ENCODE measurements at regions of chr7 and their contacts with region 1.

Region 1: GRCh38 chr7:7182156-7183060 is at the start of gene C1GALT1:
- DNase-seq: peak; percentile 99
- H3K4me3 ChIP-seq: peak within 1 kb of the TSS; percentile 70 to 98 (median 91)
- H3K27ac ChIP-seq: peak within 1 kb of the TSS; percentile 92 to 98 (median 96)
- H3K4me1 ChIP-seq: peaks cover 5 to 29% (median 20%) of the 10 kb centered on the region in 4 donors
- H3K27me3 ChIP-seq: no peaks in the 10 kb centered on the region
- CTCF ChIP-seq: peak in 1 of 3 experiments; percentile 53
- EP300 ChIP-seq: no peak
- POLR2A ChIP-seq: no peak
- total RNA-seq, gene C1GALT1: 6.7 to 13.8 (median 11.4) TPM

Region 2: DNA sequence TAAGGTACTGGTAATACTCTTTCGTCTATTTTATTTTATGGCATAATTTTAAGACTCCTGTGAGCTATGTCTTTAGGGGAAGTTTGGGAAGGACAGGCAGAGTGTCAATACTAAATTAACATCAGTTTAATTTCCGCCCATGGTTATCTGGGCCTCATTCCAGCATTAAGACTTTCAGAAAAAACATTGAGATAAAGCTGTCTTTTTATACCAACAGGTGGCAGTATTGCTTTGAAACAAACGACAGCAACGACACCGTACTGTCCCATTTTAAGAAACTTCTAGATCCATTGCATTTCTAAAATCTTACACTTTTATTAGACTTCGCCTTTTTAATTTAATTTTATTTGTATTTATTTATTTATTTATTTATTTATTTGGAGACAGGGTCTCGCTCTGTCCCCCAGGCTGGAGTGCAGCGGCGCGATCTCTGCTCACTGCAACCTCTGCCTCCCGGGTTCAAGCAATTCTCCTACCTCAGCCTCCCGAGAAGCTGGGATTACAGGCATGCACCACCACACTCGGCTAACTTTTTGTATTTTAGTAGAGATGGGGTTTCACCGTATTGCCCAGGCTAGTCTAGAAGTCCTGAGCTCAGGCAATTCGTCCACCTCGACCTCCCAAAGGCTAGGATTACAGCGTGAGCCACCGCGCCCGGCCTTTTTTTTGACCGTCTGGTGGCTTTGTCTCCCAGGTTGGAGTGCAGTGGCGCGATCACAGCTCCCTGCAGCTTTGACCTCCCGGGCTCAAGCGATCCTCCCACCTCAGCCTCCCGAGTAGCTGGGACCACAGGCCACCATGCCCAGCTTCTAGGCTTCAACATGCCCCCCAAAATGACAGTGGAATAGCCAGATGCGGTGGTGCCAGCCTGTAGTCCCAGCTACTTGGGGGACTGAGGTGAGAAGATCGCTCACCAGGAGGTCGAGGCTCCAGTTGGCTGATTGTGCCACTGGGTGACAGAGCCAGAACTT is 78.8 kb before region 1 on chr7:
- intact Hi-C with region 1: loop called (anchors 5 kb)
- DNase-seq: no peak
- H3K4me3 ChIP-seq: no peak overlapping the region
- H3K27ac ChIP-seq: no peak overlapping the region
- H3K4me1 ChIP-seq: peaks cover 14 to 15% (median 14%) of the 10 kb centered on the region in 4 donors
- H3K27me3 ChIP-seq: no peaks in the 10 kb centered on the region
- CTCF ChIP-seq: peak; percentile 62 to 66 (median 62)
- EP300 ChIP-seq: no peak
- POLR2A ChIP-seq: no peak

Region 3: DNA sequence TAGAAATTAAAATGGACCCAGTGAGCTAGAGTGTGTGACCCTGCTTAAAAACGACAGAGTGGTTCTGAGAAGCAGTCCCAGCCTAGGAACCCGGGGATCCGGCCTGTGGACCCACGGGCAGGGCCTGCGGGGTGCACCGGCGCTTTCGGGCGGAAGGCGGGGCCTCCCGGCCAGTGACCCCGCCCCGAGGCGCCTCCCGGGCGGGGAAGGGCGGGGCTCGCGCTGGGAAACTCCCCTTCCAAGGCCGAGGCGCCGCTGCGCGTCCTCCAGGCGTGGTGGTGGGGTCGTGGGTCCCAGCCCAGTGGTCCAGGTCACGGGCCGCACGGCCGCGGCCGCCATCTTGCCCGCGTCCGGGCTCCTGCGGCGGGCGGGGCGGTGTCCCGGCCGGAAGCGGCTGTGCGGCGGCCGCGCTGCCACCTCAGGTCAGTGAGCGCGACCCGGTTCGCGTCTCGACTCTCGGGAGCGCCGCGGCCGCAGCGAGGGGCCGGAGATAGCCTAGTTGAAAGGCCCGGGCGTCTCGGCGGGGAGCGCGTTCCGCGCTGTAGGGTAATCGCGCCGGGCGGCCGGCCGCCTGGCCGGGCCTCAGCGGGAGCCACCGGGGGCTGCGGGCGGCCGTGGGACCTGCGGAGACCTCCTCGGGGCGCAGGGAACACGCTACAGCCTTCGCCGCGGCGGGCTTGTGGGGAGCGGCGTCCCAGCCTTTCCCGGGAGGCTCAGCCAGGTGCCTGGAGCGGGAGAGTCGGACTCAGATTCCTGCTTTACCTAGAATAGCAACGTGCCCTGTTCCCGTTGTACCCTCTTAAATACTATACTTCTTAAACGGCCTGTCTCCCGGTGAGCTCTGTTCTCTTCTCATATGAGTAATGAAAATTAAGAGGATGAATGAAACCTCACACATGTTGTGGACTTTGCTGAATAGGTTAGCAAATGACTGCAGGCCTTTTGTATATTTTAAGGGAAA is 384.5 kb after region 1 on chr7 and contains the start of gene MIOS:
- intact Hi-C with region 1: loop called (anchors 10 kb)
- DNase-seq: peak; percentile 93
- H3K4me3 ChIP-seq: peak within 1 kb of the TSS; percentile 79 to 95 (median 91)
- H3K27ac ChIP-seq: peak within 1 kb of the TSS; percentile 85 to 98 (median 94)
- H3K4me1 ChIP-seq: peaks cover 12 to 39% (median 32%) of the 10 kb centered on the region in 4 donors
- H3K27me3 ChIP-seq: no peaks in the 10 kb centered on the region
- CTCF ChIP-seq: no peak
- EP300 ChIP-seq: no peak
- POLR2A ChIP-seq: peak; percentile 23
- total RNA-seq, gene MIOS: 17.5 to 32.5 (median 25.7) TPM

Region 4: GRCh38 chr7:7640221-7641128 is 458.1 kb after region 1 on chr7 and contains the start of gene UMAD1:
- intact Hi-C with region 1: loop called (anchors 5 kb)
- DNase-seq: peak; percentile 99
- H3K4me3 ChIP-seq: peak within 1 kb of the TSS; percentile 73 to 87 (median 78)
- H3K27ac ChIP-seq: peak within 1 kb of the TSS; percentile 88 to 93 (median 90)
- H3K4me1 ChIP-seq: peaks cover 20 to 21% (median 20%) of the 10 kb centered on the region in 4 donors
- H3K27me3 ChIP-seq: no peaks in the 10 kb centered on the region
- CTCF ChIP-seq: no peak
- EP300 ChIP-seq: no peak
- POLR2A ChIP-seq: peak; percentile 27
- total RNA-seq, gene UMAD1: 6.1 to 11.2 (median 9.3) TPM

Measured in esophagus muscularis mucosa (tissue), 4 donors.